Right cardiac atrium (tissue), 5 donors: ENCODE measurements at regions of chr6 and their contacts with region 1.

Region 1: GRCh38 chr6:20401205-20402091 is at the start of gene E2F3:
- DNase-seq: peak; percentile 99 to 100 (median 100)
- ATAC-seq: peak; percentile 96 to 98
- H3K4me3 ChIP-seq: peak within 1 kb of the TSS; percentile 86
- H3K27ac ChIP-seq: peak within 1 kb of the TSS; percentile 78
- H3K4me1 ChIP-seq: no peaks in the 10 kb centered on the region
- H3K27me3 ChIP-seq: no peaks in the 10 kb centered on the region
- total RNA-seq, gene E2F3: 6.1 to 10.1 (median 7.8) TPM

Region 2: DNA sequence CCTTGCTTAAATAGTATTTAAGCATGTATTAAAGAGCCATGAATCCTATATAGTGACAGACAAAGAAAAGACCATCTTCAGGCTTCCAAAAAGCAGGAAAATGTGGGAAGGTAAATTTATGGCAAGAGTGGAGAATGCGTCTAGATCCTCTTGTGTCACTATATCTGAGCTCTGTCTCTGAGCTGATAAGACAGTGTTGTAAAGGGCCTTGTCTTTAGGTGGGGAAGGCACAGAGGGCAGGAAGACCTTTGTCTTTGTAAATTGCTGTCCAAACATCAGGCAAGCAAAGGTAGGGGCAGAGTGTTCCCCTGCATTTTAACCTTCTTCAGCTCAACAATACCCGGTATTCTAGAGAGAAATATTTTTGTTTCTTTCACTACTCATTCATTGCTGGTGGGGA is 155.3 kb before region 1 on chr6:
- intact Hi-C with region 1: no loop called
- DNase-seq: no peak
- ATAC-seq: no peak
- H3K4me3 ChIP-seq: no peak overlapping the region
- H3K27ac ChIP-seq: no peak overlapping the region
- H3K4me1 ChIP-seq: no peaks in the 10 kb centered on the region
- H3K27me3 ChIP-seq: no peaks in the 10 kb centered on the region

Region 3: GRCh38 chr6:20291764-20292580 is 109.5 kb before region 1 on chr6:
- intact Hi-C with region 1: loop called in 1 of 4 experiments (anchors 10 kb)
- DNase-seq: peak; percentile 71 to 85 (median 78)
- ATAC-seq: peak; percentile 89
- H3K4me3 ChIP-seq: no peak overlapping the region
- H3K27ac ChIP-seq: no peak overlapping the region
- H3K4me1 ChIP-seq: no peaks in the 10 kb centered on the region
- H3K27me3 ChIP-seq: no peaks in the 10 kb centered on the region